Adrenal gland (tissue), 19 donors: ENCODE measurements at regions of chr10 and their contacts with region 1.

Region 1: GRCh38 chr10:33330543-33331378 is 3.7 kb downstream of the NRP1 start:
- DNase-seq: peak; percentile 80 to 94 (median 88)
- H3K4me3 ChIP-seq: peak overlapping the region in 1 of 4 donors; percentile 78
- H3K27ac ChIP-seq: peak overlapping the region in 3 of 5 donors; percentile 11 to 91 (median 45)
- H3K4me1 ChIP-seq: peaks cover 6 to 53% of the 10 kb centered on the region in 2 donors
- H3K27me3 ChIP-seq: no peaks in the 10 kb centered on the region
- CTCF ChIP-seq: peak; percentile 82 to 93 (median 88)
- POLR2A ChIP-seq: peak in 1 of 2 donors; percentile 14

Region 2: GRCh38 chr10:33193057-33193700 is 137.6 kb before region 1 on chr10:
- intact Hi-C with region 1: loop called in 1 of 2 experiments (anchors 5 kb)
- DNase-seq: peak; percentile 82 to 95 (median 89)
- H3K4me3 ChIP-seq: no peak overlapping the region
- H3K27ac ChIP-seq: peak overlapping the region in 2 of 5 donors; percentile 17 to 70
- H3K4me1 ChIP-seq: peaks cover 11 to 48% of the 10 kb centered on the region in 2 donors
- H3K27me3 ChIP-seq: no peaks in the 10 kb centered on the region
- CTCF ChIP-seq: peak; percentile 42 to 83 (median 70)
- POLR2A ChIP-seq: no peak

Region 3: DNA sequence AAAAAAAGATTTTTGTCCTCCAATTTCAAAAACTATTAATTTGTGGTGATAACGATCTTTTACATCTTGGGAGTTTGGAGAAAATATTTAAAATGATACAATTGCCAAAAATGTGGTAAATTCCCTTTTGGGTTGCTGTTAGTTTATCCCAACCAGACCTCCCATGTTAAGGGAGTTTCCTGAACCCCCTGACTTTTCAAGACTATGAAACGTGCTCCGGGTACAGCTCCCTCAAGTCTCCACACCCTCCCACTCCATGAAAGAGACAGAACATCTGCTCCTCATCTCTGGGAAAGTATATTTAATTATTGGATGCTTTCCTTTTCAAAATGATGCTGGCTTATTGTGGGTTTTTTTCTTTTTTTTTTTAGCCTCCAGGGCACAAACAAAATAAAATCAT is 538.3 kb after region 1 on chr10:
- intact Hi-C with region 1: loop called in 1 of 2 experiments (anchors 10 kb)
- DNase-seq: no peak
- H3K4me3 ChIP-seq: no peak overlapping the region
- H3K27ac ChIP-seq: no peak overlapping the region
- H3K4me1 ChIP-seq: peaks cover 0 to 4% of the 10 kb centered on the region in 2 donors
- H3K27me3 ChIP-seq: no peaks in the 10 kb centered on the region
- CTCF ChIP-seq: no peak
- POLR2A ChIP-seq: no peak

Region 4: GRCh38 chr10:34637418-34637911 is 1306.7 kb after region 1 on chr10:
- intact Hi-C with region 1: loop called (anchors 5 to 10 kb)
- DNase-seq: peak; percentile 47 to 85 (median 64)
- H3K4me3 ChIP-seq: peak overlapping the region in 1 of 4 donors; percentile 4
- H3K27ac ChIP-seq: no peak overlapping the region
- H3K4me1 ChIP-seq: peaks cover 0 to 25% of the 10 kb centered on the region in 2 donors
- H3K27me3 ChIP-seq: no peaks in the 10 kb centered on the region
- CTCF ChIP-seq: peak; percentile 83 to 96 (median 88)
- POLR2A ChIP-seq: no peak